Activated CD4-positive, alpha-beta T cell treated with anti-CD3 and anti-CD28 coated beads for 36 hours (primary cell): ENCODE measurements at regions of chr22 and their contacts with region 1.

Region 1: DNA sequence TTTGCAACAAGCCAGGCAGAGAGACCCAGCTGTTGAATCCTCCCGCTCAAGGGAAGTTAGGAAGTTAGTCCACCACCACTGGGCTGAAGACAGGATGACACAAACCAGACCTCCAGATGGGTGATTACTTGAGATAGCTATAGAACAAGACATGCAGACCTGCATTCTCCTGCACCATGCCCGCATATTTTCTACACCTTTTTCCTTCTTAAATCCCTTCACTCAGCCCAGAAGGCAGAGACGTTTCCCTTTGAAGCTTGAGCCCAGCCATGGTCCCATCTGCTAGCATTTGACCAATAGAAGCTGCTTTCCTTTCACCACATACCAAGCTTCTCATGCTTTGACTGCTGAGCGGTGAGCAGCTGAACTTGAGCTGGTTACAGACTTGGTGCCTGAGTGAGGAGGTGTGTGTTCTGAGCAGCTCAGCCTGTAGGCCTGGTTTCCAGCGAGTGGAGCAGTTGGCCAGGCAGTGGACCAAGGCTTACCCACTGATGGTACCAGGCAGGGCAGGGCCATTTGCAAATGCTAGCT is 29.2 kb upstream of the CBX6 start:
- DNase-seq: no peak
- ATAC-seq: no peak
- H3K4me3 Mint-ChIP-seq: no peak overlapping the region
- H3K27ac Mint-ChIP-seq: no peak overlapping the region
- H3K4me1 Mint-ChIP-seq: peaks cover 7% of the 10 kb centered on the region
- H3K27me3 Mint-ChIP-seq: peaks cover 5% of the 10 kb centered on the region

Region 2: DNA sequence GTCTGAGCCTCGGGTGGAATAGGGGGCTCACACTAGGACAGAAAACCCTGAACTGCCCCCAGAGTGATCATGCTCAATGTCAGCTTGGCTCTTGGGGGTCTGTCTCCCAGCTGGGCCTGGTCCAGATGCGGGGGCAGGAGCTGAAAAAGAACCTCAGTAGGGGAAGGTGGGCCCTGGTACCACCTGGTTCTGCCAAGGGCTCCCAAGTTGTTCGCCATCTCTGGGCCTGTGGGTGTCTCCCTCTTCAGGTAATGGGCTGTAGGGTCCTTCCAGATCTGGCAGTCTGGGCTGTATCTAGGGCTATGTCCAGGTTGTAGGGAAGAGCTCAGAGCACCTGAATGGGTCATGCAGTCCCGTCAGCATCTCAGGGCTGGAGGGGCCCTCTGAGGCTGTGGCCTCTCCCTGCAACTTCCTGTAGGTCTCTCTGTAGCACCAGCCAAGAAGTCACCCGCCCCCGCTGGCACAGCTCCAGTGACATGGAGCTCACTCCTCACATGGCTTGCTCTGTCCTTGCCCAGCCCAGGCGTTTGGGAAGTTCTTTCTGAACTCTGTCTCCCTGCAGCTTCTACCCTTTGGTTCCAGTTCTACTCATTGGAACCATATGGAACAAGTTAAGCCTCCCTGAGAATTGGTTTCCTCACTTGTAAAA is 883.8 kb before region 1 on chr22:
- CTCF ChIA-PET with region 1: no interaction called
- POLR2A ChIA-PET with region 1: no interaction called
- intact Hi-C with region 1: loop called in 1 of 2 experiments (anchors 10 kb)
- DNase-seq: no peak
- ATAC-seq: no peak
- H3K4me3 Mint-ChIP-seq: no peak overlapping the region
- H3K27ac Mint-ChIP-seq: no peak overlapping the region
- H3K4me1 Mint-ChIP-seq: no peaks in the 10 kb centered on the region
- H3K27me3 Mint-ChIP-seq: no peaks in the 10 kb centered on the region

Region 3: DNA sequence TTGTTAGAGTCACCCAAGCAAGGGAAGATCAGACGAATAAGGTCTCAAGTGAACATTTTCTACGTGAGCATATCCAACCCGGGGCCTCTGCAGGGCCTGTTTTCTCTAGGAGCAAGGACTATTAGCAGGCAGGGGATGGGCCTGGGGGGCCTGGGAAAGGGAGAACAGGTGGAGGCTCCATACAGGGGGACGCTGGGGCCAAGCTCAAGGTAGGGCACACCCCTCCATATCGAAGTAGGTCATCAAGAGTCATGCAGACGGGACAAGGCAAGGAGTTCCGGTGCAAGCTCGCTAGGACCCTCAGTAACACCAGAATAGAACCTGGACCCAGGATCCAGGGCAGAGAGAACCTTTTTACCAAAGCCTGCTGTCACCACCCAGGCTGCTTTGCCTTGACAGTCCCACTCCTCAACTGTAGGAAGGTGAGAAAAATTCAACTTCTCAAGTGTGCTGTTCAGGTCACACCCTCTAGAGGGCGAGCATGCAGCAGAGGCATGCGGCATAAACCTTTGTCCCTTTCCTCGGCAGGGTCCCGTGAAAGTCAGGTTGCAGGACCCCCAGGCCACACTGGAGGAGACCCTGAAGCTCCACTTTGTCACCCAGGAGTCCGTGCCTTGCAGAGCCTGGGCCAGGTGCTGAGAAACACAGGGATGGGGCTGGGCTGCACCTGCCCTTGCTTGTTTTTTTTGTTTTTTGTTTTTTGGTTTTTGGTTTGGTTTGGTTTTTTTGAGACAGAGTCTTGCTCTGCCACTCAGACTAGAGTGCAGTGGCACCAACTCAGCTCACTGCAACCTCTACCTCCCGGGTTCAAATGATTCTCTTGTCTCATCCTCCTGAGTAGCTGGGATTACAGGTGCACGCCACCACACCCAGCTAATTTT is 72.4 kb after region 1 on chr22:
- CTCF ChIA-PET with region 1: no interaction called
- POLR2A ChIA-PET with region 1: no interaction called
- intact Hi-C with region 1: no loop called
- DNase-seq: peak; percentile 75
- ATAC-seq: peak; percentile 94
- H3K4me3 Mint-ChIP-seq: no peak overlapping the region
- H3K27ac Mint-ChIP-seq: no peak overlapping the region
- H3K4me1 Mint-ChIP-seq: peaks cover 3% of the 10 kb centered on the region
- H3K27me3 Mint-ChIP-seq: peaks cover 10% of the 10 kb centered on the region